Right lobe of liver (tissue), 6 donors: ENCODE measurements at regions of chr17 and their contacts with region 1.

Region 1: GRCh38 chr17:54992797-54993639 is 24.5 kb downstream of the STXBP4 start:
- DNase-seq: no peak
- ATAC-seq: peak; percentile 75 to 82 (median 79)
- H3K4me3 ChIP-seq: no peak overlapping the region
- H3K27ac ChIP-seq: no peak overlapping the region
- H3K4me1 ChIP-seq: no peaks in the 10 kb centered on the region
- H3K27me3 ChIP-seq: no peaks in the 10 kb centered on the region
- CTCF ChIP-seq: peak; percentile 54 to 68 (median 67)
- POLR2A ChIP-seq: no peak

Region 2: GRCh38 chr17:55348749-55349354 is 355.8 kb after region 1 on chr17:
- intact Hi-C with region 1: loop called (anchors 10 kb)
- DNase-seq: peak in 2 of 3 donors; percentile 38 to 55
- ATAC-seq: peak; percentile 90 to 98 (median 92)
- H3K4me3 ChIP-seq: no peak overlapping the region
- H3K27ac ChIP-seq: no peak overlapping the region
- H3K4me1 ChIP-seq: peaks cover 0 to 7% (median 0%) of the 10 kb centered on the region in 4 donors
- H3K27me3 ChIP-seq: no peaks in the 10 kb centered on the region
- CTCF ChIP-seq: peak; percentile 86 to 92 (median 86)
- POLR2A ChIP-seq: no peak

Region 3: DNA sequence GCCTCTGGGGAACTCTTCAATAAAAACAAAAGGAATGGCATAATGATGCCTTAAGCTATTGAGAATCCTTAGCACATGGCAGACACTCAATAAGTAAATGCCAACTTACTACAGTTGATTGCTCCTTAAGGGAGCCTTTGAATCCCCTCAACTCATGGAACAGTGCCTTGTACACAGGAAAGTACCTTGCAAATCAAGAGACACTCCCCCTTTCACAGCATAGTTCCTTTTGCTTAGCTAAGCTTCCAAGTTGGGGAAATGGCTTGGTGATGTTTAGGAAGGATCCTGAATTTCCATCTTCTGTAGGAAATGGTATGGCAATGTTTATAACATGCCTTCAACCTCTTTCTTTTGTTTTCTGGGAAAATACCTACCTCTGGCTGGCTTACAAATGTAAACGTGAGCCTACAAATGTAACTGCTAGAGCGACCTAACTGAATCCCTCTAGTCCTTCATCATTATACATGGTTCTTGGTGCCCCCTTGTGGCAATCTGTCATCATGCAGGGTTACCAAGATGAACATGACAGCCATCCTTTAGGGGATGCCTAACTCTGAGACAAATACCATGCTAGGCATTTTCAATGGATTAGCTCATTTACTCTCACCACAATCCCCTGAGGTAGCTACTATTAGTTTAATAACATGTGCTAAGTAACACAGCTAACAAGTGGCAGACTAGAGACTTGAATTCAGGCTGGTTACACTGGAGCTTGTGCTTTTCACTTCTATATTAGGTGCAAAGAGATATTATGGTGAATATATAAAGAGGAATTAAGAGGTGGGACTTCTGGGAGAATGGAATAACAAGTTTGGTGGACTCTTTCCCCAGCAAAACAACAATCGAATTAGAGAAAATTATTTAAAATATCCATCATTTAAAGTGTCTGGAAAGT is 363.7 kb after region 1 on chr17:
- intact Hi-C with region 1: loop called in 1 of 2 experiments (anchors 10 kb)
- DNase-seq: peak in 2 of 3 donors; percentile 58 to 75
- ATAC-seq: peak; percentile 90 to 96 (median 94)
- H3K4me3 ChIP-seq: no peak overlapping the region
- H3K27ac ChIP-seq: no peak overlapping the region
- H3K4me1 ChIP-seq: no peaks in the 10 kb centered on the region
- H3K27me3 ChIP-seq: no peaks in the 10 kb centered on the region
- CTCF ChIP-seq: peak; percentile 81 to 89 (median 84)
- POLR2A ChIP-seq: no peak